Activated CD4-positive, alpha-beta T cell treated with anti-CD3 and anti-CD28 coated beads for 36 hours (primary cell): ENCODE measurements at regions of chr17 and their contacts with region 1.

Region 1: DNA sequence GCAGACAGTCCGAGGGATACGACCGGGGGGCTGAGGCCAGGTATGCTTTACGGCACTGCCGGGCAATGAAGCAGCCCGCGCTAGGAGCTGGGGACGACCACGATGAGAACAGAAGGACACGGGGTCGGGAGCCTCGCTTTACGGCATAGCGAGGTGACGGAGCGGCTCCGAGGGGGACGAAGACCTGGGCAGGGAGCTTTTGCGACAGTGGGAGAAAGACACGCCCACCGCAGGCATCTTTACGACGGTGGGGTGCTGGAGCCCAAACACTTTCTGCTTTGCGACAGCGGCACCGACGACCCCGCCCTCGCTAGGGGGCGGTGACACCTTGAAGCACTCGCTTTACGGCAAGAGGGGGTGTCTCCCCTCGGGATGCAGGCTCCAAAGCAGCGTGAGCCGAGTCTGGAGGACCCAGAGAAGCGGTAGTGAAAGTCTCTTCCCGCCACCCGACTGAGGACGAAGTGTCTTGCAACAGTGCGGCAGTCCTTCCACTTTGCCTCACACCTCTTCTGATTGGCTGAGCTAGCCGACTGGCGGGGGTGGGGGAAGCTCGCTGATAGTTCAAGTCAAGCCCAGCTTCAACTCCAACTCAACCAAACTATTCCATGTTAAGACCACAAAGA is 350 bp upstream of the NEURL4 start:
- DNase-seq: peak; percentile 98
- ATAC-seq: peak; percentile 69
- H3K4me3 Mint-ChIP-seq: peak overlapping the region; percentile 89
- H3K27ac Mint-ChIP-seq: peak overlapping the region; percentile 96
- H3K4me1 Mint-ChIP-seq: peaks cover 44% of the 10 kb centered on the region
- H3K27me3 Mint-ChIP-seq: no peaks in the 10 kb centered on the region

Region 2: DNA sequence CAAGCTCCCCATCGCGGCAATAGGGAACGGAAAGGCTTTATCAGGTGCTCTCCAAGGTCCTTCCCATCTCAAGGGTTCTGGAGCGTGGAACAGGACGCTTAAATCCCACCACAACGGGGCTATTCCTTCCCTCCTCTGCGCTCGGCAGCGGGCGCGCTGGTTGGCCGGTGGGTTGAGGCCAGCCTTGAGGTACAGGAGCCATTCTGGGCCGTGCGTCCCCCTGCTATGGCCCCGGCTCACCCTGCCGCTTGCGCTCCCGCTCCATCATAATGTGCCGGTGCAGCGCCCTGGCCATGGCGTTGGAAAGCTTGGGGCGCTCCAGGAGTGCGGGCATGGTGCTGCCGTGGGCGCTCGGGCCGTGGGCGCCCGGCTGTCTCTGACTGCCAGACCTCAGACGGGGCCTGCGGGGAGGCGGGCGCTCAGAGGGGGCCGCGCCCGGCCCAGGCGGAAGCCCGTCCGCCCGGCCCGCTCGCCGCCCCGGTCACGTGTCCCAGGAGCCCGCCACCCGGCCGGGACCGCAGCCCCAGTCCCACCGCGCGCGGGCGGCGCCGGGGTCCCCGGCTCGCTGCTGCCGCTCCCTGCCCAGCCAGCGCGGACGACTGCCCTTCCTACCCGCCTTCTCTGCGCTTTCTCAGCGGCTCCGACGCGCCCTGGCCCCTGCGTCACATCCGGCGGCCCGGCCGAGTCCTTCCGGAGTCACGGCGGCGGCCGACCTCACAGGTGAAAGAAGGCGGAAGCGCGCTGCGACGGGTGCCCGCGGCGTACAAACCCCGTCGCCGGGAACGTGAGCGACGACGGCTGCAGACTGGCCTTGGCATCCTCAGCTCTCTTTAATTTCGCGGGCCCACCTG is 14.5 kb before region 1 on chr17 and contains the start of gene GPS2:
- CTCF ChIA-PET with region 1: interaction called, 7 read pairs
- POLR2A ChIA-PET with region 1: interaction called, 11 read pairs
- intact Hi-C with region 1: loop called (anchors 1 to 2 kb)
- DNase-seq: peak; percentile 97
- ATAC-seq: peak; percentile 82
- H3K4me3 Mint-ChIP-seq: peak within 1 kb of the TSS; percentile 77
- H3K27ac Mint-ChIP-seq: peak within 1 kb of the TSS; percentile 84
- H3K4me1 Mint-ChIP-seq: peaks cover 48% of the 10 kb centered on the region
- H3K27me3 Mint-ChIP-seq: no peaks in the 10 kb centered on the region
- total RNA-seq, gene GPS2: 31.3 to 56.1 TPM

Region 3: DNA sequence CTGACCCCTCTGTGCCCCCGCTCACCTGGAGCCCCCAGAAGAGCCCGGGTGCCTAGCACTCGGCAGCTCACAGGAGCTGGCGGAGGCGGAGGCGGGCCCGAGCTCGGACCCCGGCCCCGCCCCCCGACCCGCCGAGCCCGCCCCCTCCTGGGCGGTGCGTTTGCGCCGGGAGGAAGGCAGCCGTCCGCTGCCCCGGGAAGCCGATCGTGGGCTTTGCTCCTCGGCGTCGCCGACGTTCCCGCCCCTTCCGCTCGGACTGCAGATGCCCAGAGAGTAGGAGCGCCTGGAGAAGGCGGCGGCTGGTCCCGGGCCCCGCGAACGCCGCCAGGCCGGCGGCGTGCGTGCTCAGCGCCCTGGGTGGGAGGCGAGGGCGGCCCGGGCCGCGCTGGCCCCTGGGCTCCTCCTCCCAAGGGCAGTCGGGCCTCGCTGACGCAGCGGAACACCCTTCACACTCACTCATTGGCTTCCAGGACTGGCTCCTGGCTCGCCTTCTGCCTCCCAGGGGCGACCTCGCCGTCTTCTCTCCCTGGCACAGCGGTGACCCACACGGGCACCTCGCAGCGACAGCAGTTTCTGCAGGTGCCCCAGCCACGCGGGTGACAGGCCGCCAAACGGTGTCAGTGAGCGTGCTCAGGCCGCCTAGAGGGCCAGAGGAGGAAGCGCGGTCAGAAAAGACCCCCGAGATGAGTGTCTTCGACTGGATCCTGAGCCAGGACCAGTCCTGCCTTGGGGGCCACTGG is 65.1 kb after region 1 on chr17 and contains the start of gene PLSCR3:
- CTCF ChIA-PET with region 1: no interaction called
- POLR2A ChIA-PET with region 1: no interaction called
- intact Hi-C with region 1: loop called in 1 of 2 experiments (anchors 1 kb)
- DNase-seq: peak; percentile 90
- ATAC-seq: peak; percentile 86
- H3K4me3 Mint-ChIP-seq: peak within 1 kb of the TSS; percentile 88
- H3K27ac Mint-ChIP-seq: peak within 1 kb of the TSS; percentile 95
- H3K4me1 Mint-ChIP-seq: peaks cover 26% of the 10 kb centered on the region
- H3K27me3 Mint-ChIP-seq: no peaks in the 10 kb centered on the region
- total RNA-seq, gene PLSCR3: 69.3 to 78.9 TPM

Region 4: DNA sequence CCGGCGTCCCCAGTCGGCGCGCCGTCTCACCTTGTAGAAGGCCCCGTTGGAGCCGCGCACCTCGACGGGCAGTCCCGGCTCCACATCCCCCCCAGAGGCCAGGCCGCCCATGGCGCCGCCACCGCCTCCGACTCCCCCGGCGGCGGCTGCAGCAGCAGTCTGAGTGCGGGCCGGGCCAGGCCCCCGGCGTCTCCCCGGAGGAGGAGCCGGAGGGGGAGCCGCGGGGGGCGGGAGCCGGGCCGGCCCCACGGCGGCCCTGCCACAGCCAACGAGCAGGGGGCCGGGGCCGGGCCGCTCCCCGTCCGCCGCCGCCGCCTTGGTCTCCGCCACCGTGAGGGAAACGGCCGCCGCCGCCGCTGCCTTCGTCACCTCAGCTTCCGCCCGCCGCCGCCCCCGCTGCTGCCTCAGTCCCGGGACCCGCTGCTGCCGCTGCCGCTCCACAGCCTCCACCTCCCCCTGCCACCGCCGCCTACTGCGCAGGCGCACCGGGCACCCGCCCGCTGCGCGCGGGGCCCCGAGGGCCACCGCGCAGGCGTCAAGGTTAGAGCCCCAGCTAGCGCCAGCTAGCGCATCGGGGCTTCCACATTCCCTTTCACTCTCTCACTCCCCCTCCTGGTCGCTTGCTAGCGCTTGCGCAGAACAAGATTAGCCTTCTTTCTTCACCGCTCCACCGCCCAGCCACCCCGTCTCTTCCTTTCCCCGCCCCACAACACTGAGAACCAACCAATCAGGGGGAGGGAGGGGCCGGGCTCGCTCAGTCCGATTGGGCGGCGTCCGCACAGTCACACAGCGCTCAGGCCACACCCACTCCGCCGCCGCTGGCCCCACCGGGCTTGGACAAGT is 285.2 kb after region 1 on chr17 and contains the start of gene FXR2:
- CTCF ChIA-PET with region 1: no interaction called
- POLR2A ChIA-PET with region 1: no interaction called
- intact Hi-C with region 1: loop called in 1 of 2 experiments (anchors 1 kb)
- DNase-seq: peak; percentile 100
- ATAC-seq: peak; percentile 95
- H3K4me3 Mint-ChIP-seq: peak within 1 kb of the TSS; percentile 85
- H3K27ac Mint-ChIP-seq: peak within 1 kb of the TSS; percentile 93
- H3K4me1 Mint-ChIP-seq: peaks cover 32% of the 10 kb centered on the region
- H3K27me3 Mint-ChIP-seq: no peaks in the 10 kb centered on the region
- total RNA-seq, gene FXR2: 35.6 to 50.2 TPM